A549 (cell line): ENCODE measurements at regions of chr1 and their contacts with region 1.

Region 1: DNA sequence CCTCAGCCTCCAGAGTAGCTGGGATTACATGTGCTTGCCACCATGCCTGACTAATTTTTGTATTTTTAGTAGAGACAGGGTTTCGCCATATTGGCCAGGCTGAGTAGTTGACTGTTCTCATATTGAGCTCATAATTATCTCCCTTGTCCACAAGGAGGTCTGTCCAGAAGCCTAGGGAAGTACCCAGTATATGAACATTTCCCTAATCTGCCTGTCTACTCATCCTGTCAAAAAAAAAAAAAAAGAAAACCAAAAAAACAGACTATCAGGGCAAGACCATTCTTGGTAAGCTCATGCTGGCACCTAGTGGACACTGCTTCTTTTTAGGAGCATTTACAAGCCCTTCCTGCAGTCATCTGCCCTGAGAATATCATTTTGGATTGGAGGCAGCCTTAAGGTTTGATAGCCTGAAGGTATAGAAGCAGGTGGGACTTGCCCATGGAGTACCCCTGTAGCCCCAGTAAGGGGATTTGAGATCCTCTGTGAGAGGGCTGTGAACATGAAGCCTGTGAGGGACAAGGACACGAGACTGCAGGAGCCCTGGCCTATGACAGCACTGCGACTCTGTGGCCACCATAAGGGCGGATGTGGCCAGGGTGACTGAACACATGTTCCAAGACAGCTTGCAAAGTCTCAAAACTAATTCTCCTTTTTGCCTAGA is 10.8 kb upstream of the DUSP12 start:
- DNase-seq: peak; percentile 18 to 85
- ATAC-seq: peak; percentile 87 to 92
- H3K4me3 ChIP-seq: no peak overlapping the region
- H3K27ac ChIP-seq: no peak overlapping the region
- H3K4me1 ChIP-seq: peaks cover 19% of the 10 kb centered on the region
- CTCF ChIP-seq: peak; percentile 80
- EP300 ChIP-seq: no peak
- POLR2A ChIP-seq: no peak
- RAD21 ChIP-seq: peak; percentile 83 to 95

Region 2: DNA sequence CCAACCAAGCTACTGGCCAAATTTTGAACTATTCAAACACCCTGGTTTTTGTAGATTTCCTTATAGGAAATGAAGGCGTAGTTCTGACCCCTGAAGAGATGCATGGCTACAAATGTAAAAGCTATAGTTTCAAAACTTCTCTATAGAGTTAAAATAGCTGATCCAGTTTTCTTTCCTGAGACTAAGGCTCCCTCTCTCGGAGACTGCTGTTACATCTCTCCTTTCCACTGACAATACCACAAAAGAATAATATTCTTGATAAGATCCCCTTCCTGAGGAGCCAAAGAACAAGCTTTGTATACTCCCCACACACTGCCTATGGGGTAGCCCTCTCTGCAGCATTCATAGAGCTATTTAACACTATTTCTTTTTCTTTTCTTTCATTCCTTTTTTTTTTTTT is 364.4 kb before region 1 on chr1:
- CTCF ChIA-PET with region 1: no interaction called
- POLR2A ChIA-PET with region 1: no interaction called
- DNase-seq: peak; percentile 23 to 29
- ATAC-seq: peak; percentile 66 to 85; a peak in 5 of 6 replicates
- H3K4me3 ChIP-seq: no peak overlapping the region
- H3K27ac ChIP-seq: no peak overlapping the region
- H3K4me1 ChIP-seq: peaks cover 9% of the 10 kb centered on the region; the same call in 2 of the 3 replicates
- CTCF ChIP-seq: peak; percentile 35; the same call in 2 of the 3 replicates
- EP300 ChIP-seq: no peak
- POLR2A ChIP-seq: no peak
- RAD21 ChIP-seq: peak; percentile 59 to 69; a peak in 4 of 5 replicates

Region 3: DNA sequence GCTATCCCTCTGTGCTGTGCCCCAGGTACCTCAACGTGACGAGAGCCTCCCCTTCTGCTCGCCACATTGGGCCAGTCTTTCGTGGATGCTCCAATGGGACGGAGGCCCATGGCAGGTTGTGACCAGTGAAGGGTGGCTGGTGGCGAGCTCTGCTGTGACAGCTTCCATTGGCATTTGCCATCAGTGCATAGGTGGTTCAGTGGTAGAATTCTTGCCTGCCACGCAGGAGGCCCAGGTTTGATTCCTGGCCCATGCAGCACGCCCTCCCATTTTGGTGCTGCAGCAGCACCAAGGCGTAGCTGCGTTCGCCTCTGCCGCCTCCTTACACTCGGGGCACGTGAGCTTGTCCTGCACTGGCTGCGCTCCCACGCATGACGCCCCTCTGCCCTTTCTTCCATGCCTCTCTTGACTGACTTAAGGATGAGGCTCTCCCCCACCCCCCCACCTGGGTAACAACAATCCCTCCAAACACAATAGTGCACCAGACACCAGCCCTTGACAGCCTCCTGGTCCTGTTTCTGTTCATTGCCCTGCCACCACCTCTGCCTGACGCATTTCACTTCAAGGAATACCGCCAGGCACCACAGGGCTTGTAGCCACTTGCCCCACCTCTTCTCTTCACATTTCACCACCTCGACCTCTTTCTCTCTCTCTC is 258.2 kb before region 1 on chr1:
- CTCF ChIA-PET with region 1: interaction called, 65 read pairs
- POLR2A ChIA-PET with region 1: no interaction called
- DNase-seq: peak in 1 of 2 experiments; percentile 61
- ATAC-seq: peak; percentile 64 to 67
- H3K4me3 ChIP-seq: no peak overlapping the region
- H3K27ac ChIP-seq: no peak overlapping the region
- H3K4me1 ChIP-seq: peaks cover 11% of the 10 kb centered on the region; the same call in 1 of the 3 replicates
- CTCF ChIP-seq: no peak
- EP300 ChIP-seq: no peak
- POLR2A ChIP-seq: no peak
- RAD21 ChIP-seq: no peak

Region 4: GRCh38 chr1:161486806-161487741 is 251.7 kb before region 1 on chr1:
- CTCF ChIA-PET with region 1: interaction called, 71 read pairs
- POLR2A ChIA-PET with region 1: no interaction called
- DNase-seq: peak; percentile 48 to 66
- ATAC-seq: peak; percentile 71 to 85; a peak in 4 of 6 replicates
- H3K4me3 ChIP-seq: no peak overlapping the region
- H3K27ac ChIP-seq: no peak overlapping the region
- H3K4me1 ChIP-seq: peaks cover 4% of the 10 kb centered on the region; the same call in 1 of the 3 replicates
- CTCF ChIP-seq: peak; percentile 77
- EP300 ChIP-seq: no peak
- POLR2A ChIP-seq: no peak
- RAD21 ChIP-seq: peak; percentile 71 to 82

Region 5: DNA sequence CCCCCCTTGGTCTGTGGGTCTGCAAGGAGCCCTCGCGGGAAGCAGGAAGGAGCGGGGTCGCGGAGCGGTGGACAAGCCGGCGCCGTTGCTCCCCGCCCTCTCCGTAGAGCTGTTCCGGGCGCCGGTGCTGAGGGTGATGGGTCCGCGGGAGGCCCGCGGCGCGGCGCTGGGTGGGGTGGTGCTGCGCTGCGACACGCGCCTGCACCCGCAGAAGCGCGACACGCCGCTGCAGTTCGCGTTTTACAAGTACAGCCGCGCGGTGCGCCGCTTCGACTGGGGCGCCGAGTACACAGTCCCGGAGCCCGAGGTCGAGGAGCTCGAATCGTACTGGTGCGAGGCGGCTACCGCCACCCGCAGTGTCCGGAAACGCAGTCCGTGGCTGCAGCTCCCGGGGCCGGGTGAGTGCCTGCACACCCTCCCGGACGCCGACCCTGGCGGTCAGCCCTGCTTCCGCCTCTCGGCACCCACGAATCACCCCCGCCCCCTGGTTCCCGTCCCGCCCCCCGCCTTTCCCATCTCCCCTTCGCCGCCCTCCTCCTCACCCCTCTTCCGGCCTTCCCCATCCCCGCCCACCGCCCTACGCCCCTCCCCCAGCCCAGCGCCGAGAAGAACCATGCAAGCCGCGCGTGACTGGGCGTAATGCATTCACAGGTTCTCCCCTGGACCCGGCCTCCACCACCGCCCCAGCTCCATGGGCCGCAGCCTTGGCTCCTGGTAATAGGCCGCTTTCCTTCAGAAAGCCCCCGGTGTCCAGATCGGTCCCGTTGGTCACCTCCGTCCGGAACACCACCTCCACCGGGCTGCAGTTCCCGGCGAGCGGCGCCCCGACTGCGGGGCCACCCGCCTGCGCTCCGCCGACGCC is 11.9 kb before region 1 on chr1:
- CTCF ChIA-PET with region 1: interaction called, 80 read pairs
- POLR2A ChIA-PET with region 1: interaction called, 12 read pairs
- DNase-seq: peak; percentile 76 to 89
- ATAC-seq: peak; percentile 82 to 86
- H3K4me3 ChIP-seq: peak overlapping the region; percentile 73
- H3K27ac ChIP-seq: peak overlapping the region; percentile 90 to 97
- H3K4me1 ChIP-seq: peaks cover 15% of the 10 kb centered on the region; the same call in 2 of the 3 replicates
- CTCF ChIP-seq: no peak
- EP300 ChIP-seq: no peak
- POLR2A ChIP-seq: peak; percentile 96
- RAD21 ChIP-seq: no peak

Region 6: GRCh38 chr1:161792740-161793139 is 54.0 kb after region 1 on chr1:
- CTCF ChIA-PET with region 1: no interaction called
- POLR2A ChIA-PET with region 1: no interaction called
- DNase-seq: peak; percentile 51 to 74
- ATAC-seq: peak; percentile 91 to 93
- H3K4me3 ChIP-seq: no peak overlapping the region
- H3K27ac ChIP-seq: no peak overlapping the region
- H3K4me1 ChIP-seq: peaks cover 4% of the 10 kb centered on the region; the same call in 1 of the 3 replicates
- CTCF ChIP-seq: peak; percentile 78
- EP300 ChIP-seq: no peak
- POLR2A ChIP-seq: no peak
- RAD21 ChIP-seq: peak; percentile 84 to 89

Region 7: GRCh38 chr1:161843156-161843555 is 104.4 kb after region 1 on chr1:
- CTCF ChIA-PET with region 1: no interaction called
- POLR2A ChIA-PET with region 1: no interaction called
- DNase-seq: no peak
- ATAC-seq: no peak
- H3K4me3 ChIP-seq: no peak overlapping the region
- H3K27ac ChIP-seq: no peak overlapping the region
- H3K4me1 ChIP-seq: no peaks in the 10 kb centered on the region
- CTCF ChIP-seq: no peak
- EP300 ChIP-seq: no peak
- POLR2A ChIP-seq: no peak
- RAD21 ChIP-seq: no peak